Adrenal gland (tissue), 19 donors: ENCODE measurements at regions of chr2 and their contacts with region 1.

Region 1: DNA sequence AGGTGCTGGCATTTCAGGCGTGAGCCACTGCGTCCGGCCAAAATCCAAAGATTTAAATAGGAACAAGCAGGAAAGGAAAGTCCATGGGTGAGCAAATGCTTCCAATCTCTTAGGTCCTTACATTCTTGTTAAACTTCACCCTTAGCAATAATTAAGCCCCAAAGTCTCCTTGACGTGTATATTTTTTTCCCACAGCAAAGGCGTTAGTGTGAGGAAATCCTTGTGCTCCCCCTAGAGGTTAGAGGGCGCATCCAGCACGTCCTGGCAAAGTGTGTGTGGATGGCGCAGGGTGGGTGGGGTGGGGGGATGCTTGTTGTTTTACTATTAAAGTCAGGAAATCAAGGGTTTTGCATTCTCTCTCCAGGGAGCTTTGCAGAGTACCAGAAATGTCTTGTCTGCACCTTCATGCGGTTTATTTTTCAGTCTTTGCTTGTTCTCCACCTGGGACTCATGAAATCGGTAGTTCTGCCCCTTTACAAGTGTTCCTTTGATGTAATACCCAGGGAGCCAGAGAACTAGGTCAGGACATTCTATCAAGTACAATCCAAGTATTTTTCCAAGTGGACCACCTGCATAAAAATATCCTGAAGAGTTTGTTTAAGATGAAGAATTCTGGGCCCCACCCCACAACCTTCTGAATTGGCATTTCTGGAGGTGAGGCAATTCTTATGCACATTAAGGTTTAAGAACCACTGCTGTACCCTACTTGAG is 22.2 kb upstream of the ITSN2 start:
- DNase-seq: peak; percentile 58 to 79 (median 62)
- H3K4me3 ChIP-seq: no peak overlapping the region
- H3K27ac ChIP-seq: no peak overlapping the region
- H3K4me1 ChIP-seq: peaks cover 0 to 7% of the 10 kb centered on the region in 2 donors
- H3K27me3 ChIP-seq: no peaks in the 10 kb centered on the region
- CTCF ChIP-seq: peak; percentile 46 to 74 (median 61)
- POLR2A ChIP-seq: no peak

Region 2: GRCh38 chr2:23698721-23699492 is 683.6 kb before region 1 on chr2:
- intact Hi-C with region 1: no loop called
- DNase-seq: peak in 5 of 7 donors; percentile 24 to 80 (median 51)
- H3K4me3 ChIP-seq: no peak overlapping the region
- H3K27ac ChIP-seq: peak overlapping the region in 2 of 5 donors; percentile 59 to 65
- H3K4me1 ChIP-seq: peaks cover 0 to 16% of the 10 kb centered on the region in 2 donors
- H3K27me3 ChIP-seq: no peaks in the 10 kb centered on the region
- CTCF ChIP-seq: no peak
- POLR2A ChIP-seq: no peak

Region 3: GRCh38 chr2:24228470-24228869 is 154.0 kb before region 1 on chr2:
- intact Hi-C with region 1: loop called (anchors 5 to 10 kb)
- DNase-seq: no peak
- H3K4me3 ChIP-seq: no peak overlapping the region
- H3K27ac ChIP-seq: no peak overlapping the region
- H3K4me1 ChIP-seq: no peaks in the 10 kb centered on the region
- H3K27me3 ChIP-seq: no peaks in the 10 kb centered on the region
- CTCF ChIP-seq: peak; percentile 21 to 50 (median 35)
- POLR2A ChIP-seq: no peak